ENCODE measurements at regions of chr14 and their contacts with region 1.

Region 1: DNA sequence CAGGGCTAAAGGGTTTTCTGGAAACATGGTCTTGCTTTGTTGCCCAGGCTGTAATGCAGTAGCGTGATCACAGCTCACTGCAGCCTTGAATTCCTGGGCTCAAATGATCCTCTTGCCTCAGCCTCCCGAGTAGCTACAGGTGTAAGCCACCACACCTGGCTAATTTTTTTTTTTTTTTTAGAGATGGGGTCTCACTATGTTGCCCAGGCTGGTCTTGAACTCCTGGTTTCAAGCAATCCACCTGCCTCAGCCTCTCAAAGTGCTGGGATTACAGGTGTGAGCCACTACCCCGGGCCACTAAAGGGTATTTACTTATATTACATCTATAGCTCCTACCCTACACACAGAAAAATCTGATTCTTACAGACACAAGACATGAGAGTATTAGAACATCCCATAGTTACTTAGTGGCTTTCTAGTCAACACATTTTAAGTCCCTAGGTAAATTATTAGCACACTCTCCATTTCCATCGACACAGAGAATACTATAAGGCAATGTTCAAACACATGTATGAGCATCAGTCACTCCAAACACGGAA is 6.2 kb upstream of the DCAF11 start:
- DNase-seq: no peak

Region 2: DNA sequence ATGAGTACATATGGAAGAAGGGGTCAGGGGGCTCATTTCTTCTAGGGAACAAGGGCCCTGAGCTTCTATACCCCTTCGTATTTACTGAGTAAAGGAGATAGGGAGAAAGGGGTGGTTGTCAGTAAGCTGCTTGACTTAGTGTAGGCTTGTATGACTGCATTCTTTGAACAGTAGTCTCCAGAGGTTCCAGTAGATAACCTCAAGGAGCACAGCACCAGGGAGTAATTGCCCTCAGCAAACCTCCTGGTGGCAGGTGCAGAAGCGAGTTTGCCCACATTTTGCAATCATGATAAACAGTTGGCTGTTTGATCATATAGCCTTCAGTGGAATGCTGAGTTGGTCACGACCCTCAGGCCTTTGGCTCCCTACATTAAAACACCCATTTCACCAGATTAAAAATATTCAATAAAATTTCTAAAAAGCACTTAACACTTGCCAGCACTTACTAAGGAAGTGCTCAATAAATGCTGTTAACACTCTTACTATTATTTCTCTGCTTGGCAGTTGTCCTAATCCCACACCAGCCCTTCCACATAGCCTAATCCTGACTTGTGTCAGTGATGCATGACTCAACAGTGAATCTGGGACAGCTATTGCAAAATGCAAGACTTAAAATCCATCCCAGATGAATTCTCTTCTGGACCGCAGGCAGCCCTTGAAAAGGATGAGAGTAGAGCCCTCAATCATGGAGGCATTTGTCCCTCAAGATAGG is 123.4 kb before region 1 on chr14:
- CTCF ChIA-PET with region 1: no interaction called
- POLR2A ChIA-PET with region 1: no interaction called
- DNase-seq: no peak

Region 3: DNA sequence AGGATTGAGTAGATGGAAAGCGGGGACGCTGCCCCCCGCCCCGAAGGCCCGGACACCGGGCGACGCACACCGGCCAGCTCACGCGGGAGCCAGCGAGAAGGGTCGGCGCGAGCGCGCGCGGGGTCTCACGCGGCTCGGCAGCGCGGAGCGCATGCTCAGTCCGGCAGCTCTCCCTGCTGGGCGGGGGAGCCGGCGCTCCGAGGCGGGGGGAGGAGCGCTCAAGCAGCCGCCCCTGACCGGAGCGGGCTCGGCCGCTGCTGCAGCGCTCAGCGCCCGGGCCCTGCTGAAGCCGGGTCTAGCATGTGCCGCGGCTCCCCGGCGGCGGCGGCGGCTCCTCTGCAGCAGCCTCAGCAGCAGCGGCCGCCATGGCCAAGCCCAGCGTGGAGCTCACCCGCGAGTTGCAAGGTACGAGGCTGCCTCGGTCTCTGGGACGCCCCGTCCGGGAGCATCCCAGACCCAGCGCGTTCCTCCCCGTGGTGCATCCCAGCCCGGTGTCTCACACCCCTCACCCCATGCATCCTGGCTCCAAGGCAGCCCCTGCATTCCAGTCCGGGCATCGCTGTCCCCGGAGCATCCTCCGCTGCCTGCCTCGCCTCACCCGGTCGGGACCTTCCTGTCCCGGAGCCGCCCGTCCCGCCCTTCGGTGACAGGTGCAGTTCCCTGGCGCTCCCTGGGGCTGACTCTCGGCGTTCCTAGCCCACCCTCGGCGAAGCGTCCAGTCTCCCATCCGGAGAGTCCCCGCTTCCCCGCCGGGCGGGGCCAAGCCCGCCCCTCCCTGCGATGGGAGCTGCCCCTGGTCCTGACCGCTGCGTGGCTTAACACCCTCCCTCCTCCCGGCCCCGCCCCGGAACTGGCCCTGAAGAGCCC is 56.4 kb before region 1 on chr14 and contains the start of gene CARMIL3:
- CTCF ChIA-PET with region 1: interaction called, 114 read pairs
- POLR2A ChIA-PET with region 1: interaction called, 22 read pairs
- DNase-seq: peak; percentile 77

Region 4: GRCh38 chr14:24058260-24058950 is 50.0 kb before region 1 on chr14:
- CTCF ChIA-PET with region 1: interaction called, 114 read pairs
- POLR2A ChIA-PET with region 1: interaction called, 26 read pairs
- DNase-seq: peak; percentile 85

Region 5: GRCh38 chr14:24080888-24081738 is 27.3 kb before region 1 on chr14:
- CTCF ChIA-PET with region 1: interaction called, 21 read pairs
- POLR2A ChIA-PET with region 1: interaction called, 21 read pairs
- DNase-seq: peak; percentile 62

Region 6: DNA sequence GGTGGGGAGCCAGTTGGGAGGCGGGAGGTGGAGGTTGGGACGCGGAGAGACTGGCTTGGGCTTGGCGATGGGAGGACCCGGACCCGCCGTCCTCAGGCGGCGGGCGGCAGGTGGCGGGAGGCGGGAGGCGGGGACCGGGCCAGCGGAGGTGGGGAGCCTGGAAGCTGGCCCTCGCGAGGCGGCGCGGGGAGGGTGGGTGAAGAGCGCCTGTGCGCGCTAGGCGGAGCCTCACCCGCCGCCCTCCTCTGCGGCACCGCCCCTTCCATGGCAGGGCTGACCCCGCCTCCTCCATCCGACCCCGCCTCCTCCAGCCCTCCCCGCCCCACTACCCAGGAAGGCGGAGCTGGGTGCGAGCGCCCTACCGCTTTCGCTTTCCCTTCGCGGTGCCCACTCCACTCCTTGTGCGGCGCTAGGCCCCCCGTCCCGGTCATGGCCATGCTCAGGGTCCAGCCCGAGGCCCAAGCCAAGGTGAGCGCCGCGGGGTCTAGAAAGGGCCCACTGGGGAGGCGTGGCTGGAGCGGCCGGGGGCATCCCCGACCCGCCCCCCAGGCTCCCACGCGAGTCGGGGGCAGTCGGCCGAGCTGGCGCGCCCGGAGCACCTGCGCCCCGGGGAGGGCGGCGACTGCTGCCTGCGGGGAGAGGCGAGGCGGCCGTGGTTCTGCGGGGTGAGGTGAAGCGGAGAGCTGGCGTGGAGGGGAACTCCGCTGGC is 27.6 kb after region 1 on chr14 and contains the start of gene PSME1:
- CTCF ChIA-PET with region 1: interaction called, 6 read pairs
- POLR2A ChIA-PET with region 1: interaction called, 62 read pairs
- DNase-seq: peak; percentile 91